ENCODE measurements at regions of chr17 and their contacts with region 1.

Region 1: DNA sequence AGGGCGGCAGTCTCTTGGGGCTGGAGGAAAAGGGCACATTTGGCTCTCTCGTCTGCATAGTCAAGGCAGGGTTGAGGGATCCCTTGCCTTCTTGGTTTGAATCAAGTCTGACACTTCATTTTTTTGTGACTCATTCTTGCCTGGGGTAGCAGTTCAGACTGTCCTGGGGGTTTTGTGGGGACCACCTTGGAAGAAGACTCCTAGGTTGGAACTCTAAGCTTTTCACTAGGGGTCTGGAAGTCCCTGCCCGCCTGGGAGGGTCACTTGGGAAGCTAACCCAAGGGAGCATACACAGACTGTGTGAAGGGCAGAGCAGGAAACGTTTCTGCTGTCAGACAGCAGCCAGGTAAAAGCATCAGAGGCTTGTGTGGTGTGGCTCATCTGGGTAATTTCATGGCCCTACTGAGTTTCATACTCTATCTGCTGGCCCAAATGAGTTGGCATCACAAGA is 11.3 kb downstream of the YPEL2 start:
- DNase-seq: no peak
- ATAC-seq: no peak

Region 2: GRCh38 chr17:59139939-59140338 is 202.8 kb before region 1 on chr17:
- intact Hi-C with region 1: no loop called
- DNase-seq: no peak
- ATAC-seq: no peak

Region 3: GRCh38 chr17:59357929-59358328 is 15.2 kb after region 1 on chr17:
- intact Hi-C with region 1: loop called in 1 of 2 experiments (anchors 2 kb)
- DNase-seq: no peak
- ATAC-seq: peak in 1 of 2 donors; percentile 75